ENCODE measurements at regions of chr12 and their contacts with region 1.

Region 1: DNA sequence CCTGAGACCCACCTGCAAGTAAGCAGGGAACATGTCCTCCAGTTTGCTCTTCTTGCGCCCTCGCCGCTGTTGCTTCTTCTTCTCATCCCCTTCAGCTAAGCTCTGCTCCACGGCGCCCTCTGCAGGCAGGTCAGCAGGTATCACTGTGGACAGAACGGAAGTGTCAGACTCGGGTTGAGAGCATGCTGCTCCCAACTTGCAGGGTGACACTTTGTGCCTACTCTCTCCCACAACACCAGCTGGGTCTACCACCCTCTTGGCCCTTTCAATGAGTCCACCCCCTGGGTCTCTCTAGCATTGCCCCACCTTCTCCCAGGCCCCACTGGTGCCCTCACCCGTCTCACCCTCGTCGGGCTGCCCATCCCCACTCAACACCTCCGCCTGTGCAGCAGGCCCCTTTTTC is 16.7 kb downstream of the KMT2D start:
- DNase-seq: peak in 1 of 2 experiments; percentile 96
- H3K4me3 ChIP-seq: no peak overlapping the region
- H3K27ac ChIP-seq: no peak overlapping the region
- H3K4me1 ChIP-seq: no peaks in the 10 kb centered on the region
- H3K27me3 ChIP-seq: no peaks in the 10 kb centered on the region
- CTCF ChIP-seq: peak in 2 of 3 experiments; percentile 71 to 99; a peak in 3 of 4 replicates
- EP300 ChIP-seq: no peak
- POLR2A ChIP-seq: no peak
- RAD21 ChIP-seq: peak; percentile 19 to 20; a peak in 2 of 4 replicates

Region 2: GRCh38 chr12:48882315-48882687 is 161.6 kb before region 1 on chr12:
- CTCF ChIA-PET with region 1: no interaction called
- POLR2A ChIA-PET with region 1: no interaction called
- DNase-seq: no peak
- H3K4me3 ChIP-seq: peak overlapping the region in 3 of 4 experiments; percentile 14 to 40 (median 29); a peak in 6 of 8 replicates
- H3K27ac ChIP-seq: no peak overlapping the region
- H3K4me1 ChIP-seq: peaks cover 15 to 25% (median 19%) of the 10 kb centered on the region in 4 experiments
- H3K27me3 ChIP-seq: no peaks in the 10 kb centered on the region
- CTCF ChIP-seq: no peak
- EP300 ChIP-seq: no peak
- POLR2A ChIP-seq: no peak
- RAD21 ChIP-seq: no peak

Region 3: DNA sequence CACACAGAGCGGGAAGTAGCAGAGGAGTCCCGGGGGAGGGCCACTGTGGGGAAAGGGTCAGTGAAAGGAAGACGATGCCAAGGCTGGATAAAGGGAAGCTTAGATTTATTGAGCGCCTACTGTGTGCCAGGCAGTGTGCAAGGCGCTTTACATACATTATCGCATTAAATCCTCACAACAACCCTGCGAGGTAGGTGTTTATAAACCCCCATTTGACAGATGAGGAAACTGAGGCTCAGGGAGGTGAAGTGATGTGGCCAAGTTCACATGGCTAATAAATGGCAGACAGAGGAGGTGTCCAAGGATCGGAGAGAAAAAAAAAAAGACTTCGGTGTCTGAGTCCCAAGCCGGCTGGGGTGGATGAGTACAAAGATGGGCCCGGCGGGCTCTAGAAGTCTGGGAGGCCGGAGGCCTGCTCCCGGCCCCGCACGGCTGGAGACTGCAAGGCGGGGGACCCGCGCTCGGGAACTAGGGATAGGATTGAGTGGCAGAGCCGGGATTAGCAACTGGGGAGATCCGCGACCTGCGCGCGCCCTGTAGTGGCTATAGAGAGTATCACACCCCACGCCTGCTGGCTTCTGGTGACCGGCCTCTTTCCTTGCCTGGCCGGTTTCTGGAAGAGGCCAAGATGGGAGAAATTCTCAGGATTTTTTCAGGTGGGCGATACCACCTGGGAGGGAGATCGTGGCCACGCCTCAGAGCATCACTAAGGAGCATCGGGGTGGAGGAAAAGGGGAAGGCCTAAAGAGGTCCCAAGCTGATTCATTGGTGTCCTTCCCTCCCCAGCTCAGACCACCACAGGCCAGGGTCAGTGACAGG is 48.6 kb before region 1 on chr12:
- CTCF ChIA-PET with region 1: interaction called, 11 read pairs
- POLR2A ChIA-PET with region 1: no interaction called
- DNase-seq: peak in 1 of 2 experiments; percentile 92
- H3K4me3 ChIP-seq: peak overlapping the region in 1 of 4 experiments; percentile 40; a peak in 2 of 8 replicates
- H3K27ac ChIP-seq: no peak overlapping the region
- H3K4me1 ChIP-seq: peaks cover 9 to 29% (median 16%) of the 10 kb centered on the region in 4 experiments
- H3K27me3 ChIP-seq: peaks cover 50 to 74% (median 70%) of the 10 kb centered on the region in 4 experiments
- CTCF ChIP-seq: peak; percentile 74 to 91 (median 76)
- EP300 ChIP-seq: peak in 1 of 2 experiments; percentile 47; a peak in 1 of 3 replicates
- POLR2A ChIP-seq: no peak
- RAD21 ChIP-seq: peak; percentile 80 to 83

Region 4: DNA sequence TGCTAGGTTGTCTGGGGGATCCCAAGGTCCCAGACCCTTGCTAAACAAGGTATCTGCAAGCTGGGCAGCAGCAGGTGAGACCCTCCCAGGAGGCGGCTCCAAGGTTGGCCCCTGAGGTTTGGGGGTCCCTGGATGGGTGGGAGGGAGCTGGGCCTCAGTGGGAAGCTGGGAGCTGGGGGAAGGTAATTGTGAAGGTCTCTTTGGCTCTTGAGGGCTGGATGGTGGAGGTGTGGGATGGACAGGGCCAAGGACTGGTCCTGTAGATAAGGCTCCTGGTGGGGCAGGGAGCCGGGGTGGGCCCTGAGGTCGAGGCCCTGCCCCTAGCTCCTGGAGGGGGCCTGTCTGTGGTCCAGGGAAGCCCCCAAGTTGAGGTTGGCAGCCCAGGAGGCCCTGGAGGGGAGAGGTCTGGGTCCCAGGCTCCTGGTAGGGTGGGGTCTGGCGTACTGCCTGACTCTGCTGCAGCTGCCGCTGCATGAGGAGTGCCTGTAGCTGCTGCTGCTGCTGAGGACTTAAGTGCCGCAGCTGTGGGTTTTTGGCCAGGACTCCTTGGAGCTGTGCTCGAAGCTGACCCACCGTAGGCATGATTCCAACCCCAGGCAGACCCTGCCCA is 12.2 kb before region 1 on chr12:
- CTCF ChIA-PET with region 1: interaction called, 126 read pairs
- POLR2A ChIA-PET with region 1: interaction called, 339 read pairs
- DNase-seq: no peak
- H3K4me3 ChIP-seq: no peak overlapping the region
- H3K27ac ChIP-seq: no peak overlapping the region
- H3K4me1 ChIP-seq: no peaks in the 10 kb centered on the region
- H3K27me3 ChIP-seq: no peaks in the 10 kb centered on the region
- CTCF ChIP-seq: no peak
- EP300 ChIP-seq: no peak
- POLR2A ChIP-seq: no peak
- RAD21 ChIP-seq: no peak

Region 5: GRCh38 chr12:49188914-49189367 is 145.1 kb after region 1 on chr12 and contains the start of gene TUBA1A:
- CTCF ChIA-PET with region 1: no interaction called
- POLR2A ChIA-PET with region 1: no interaction called
- DNase-seq: peak; percentile 89 to 95
- H3K4me3 ChIP-seq: peak within 1 kb of the TSS; percentile 57 to 93 (median 84)
- H3K27ac ChIP-seq: peak within 1 kb of the TSS; percentile 76
- H3K4me1 ChIP-seq: no peaks in the 10 kb centered on the region; a peak in 2 of 7 replicates
- H3K27me3 ChIP-seq: no peaks in the 10 kb centered on the region
- CTCF ChIP-seq: no peak
- EP300 ChIP-seq: no peak
- POLR2A ChIP-seq: peak; percentile 93 to 96
- RAD21 ChIP-seq: no peak
- total RNA-seq, gene TUBA1A: 283 and 290 TPM in 2 replicates